ENCODE measurements at regions of chr12 and their contacts with region 1.

Region 1: DNA sequence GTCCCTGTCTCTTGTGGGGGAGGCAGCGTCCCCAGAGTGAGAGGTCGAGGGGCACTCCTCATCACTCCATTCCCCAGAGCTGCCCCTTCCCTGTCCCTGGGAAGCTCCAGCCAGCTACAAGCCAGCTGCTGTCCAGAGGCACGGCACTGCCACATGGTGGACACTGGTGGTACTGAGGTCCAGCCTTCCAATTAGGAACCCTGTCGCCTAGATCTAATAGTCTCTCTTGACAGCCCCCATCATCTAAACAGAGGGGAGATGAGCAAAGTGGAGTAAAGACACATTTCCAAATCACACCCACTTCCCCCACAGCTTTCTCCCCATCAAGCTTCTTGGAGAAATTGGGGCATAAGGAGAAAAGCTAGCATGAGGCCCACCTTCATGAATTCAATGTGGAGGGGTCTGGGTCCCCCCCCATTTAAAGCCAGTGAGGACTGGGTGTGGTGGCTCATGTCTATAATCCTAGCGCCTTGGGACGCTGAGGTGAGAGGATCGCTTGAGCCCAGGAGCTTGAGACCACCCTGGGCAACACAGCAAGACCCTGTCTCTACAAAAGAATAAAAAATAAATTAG is 2.1 kb upstream of the INHBE start:
- DNase-seq: peak; percentile 44
- H3K4me3 Mint-ChIP-seq: no peak overlapping the region
- H3K27ac Mint-ChIP-seq: peak overlapping the region; percentile 67
- H3K4me1 Mint-ChIP-seq: peaks cover 30% of the 10 kb centered on the region
- H3K27me3 Mint-ChIP-seq: no peaks in the 10 kb centered on the region

Region 2: DNA sequence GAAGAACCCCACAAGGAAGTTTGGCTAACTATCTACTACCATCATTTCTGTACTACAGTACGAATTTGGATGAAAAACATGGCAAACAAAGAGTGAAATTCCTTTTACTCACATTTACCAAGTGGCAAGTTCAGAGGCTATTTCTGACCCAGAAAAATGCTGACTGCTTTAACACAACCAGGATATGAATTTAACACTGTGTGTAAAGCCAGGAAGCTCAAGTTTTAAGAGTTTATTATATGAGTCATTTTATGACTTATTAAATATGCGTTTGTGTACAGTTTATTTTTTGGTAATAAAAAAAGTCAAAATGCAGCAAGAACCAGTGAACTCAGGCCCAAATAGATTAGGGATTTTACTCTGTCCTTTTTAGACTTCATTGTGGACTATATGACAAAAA is 143.6 kb before region 1 on chr12:
- intact Hi-C with region 1: loop called (anchors 2 kb)
- DNase-seq: no peak
- H3K4me3 Mint-ChIP-seq: no peak overlapping the region
- H3K27ac Mint-ChIP-seq: no peak overlapping the region
- H3K4me1 Mint-ChIP-seq: peaks cover 8% of the 10 kb centered on the region
- H3K27me3 Mint-ChIP-seq: no peaks in the 10 kb centered on the region

Region 3: GRCh38 chr12:57430931-57431720 is 21.9 kb before region 1 on chr12 and contains the start of gene R3HDM2:
- intact Hi-C with region 1: loop called (anchors 2 kb)
- DNase-seq: peak; percentile 91
- H3K4me3 Mint-ChIP-seq: peak within 1 kb of the TSS; percentile 93
- H3K27ac Mint-ChIP-seq: peak within 1 kb of the TSS; percentile 97
- H3K4me1 Mint-ChIP-seq: peaks cover 30% of the 10 kb centered on the region
- H3K27me3 Mint-ChIP-seq: no peaks in the 10 kb centered on the region
- total RNA-seq, gene R3HDM2: 44.9 and 46.9 TPM in 2 replicates

Region 4: DNA sequence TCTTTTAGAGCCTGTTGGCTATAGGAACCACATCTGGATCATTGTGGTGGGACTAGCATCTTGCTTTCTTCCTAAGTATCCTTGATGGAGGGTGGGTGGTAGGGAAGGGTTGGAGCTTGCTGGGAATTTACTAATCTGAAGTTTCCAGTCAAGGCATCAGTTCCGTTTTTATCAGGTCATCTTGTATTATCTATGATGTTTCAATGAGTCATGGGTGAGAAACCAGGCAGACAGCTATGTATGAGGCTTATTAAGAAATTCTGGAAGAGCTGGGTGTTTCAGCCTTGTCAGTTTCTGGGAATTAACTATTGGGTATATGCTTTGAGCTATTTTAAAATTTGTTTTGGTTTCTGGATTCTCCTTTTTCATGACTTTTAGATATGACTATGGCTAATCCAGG is 340.9 kb after region 1 on chr12:
- intact Hi-C with region 1: no loop called
- DNase-seq: no peak
- H3K4me3 Mint-ChIP-seq: no peak overlapping the region
- H3K27ac Mint-ChIP-seq: peak overlapping the region; percentile 55
- H3K4me1 Mint-ChIP-seq: peaks cover 11% of the 10 kb centered on the region
- H3K27me3 Mint-ChIP-seq: no peaks in the 10 kb centered on the region